T-cell (primary cell): ENCODE measurements at regions of chr7 and their contacts with region 1.

Region 1: DNA sequence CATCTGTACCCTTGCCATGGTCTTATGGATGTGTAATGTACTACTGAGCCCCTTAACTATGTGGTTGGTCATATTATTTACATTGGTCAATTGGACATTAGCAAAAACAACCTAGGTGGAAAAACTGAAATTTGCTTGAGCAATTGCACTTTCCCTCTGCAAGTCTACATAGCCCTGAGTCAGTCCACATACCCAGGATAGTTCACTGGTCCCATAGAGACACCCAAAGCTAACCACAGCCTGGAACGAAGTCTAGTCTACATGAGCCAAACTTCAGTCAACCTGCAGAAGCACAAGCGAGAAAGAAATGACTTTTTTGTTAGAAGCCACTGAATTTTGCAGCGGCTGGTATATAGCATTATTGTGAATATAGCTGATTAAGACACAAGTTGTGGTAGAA is 37.6 kb upstream of the COL1A2 start:
- DNase-seq: no peak
- ATAC-seq: no peak
- H3K4me3 ChIP-seq: no peak overlapping the region
- H3K4me3 Mint-ChIP-seq: no peak overlapping the region
- H3K27ac ChIP-seq: no peak overlapping the region
- H3K27ac Mint-ChIP-seq: no peak overlapping the region
- H3K4me1 ChIP-seq: no peaks in the 10 kb centered on the region
- H3K4me1 Mint-ChIP-seq: no peaks in the 10 kb centered on the region
- H3K27me3 ChIP-seq: no peaks in the 10 kb centered on the region
- H3K27me3 Mint-ChIP-seq: peaks cover 5 to 29% of the 10 kb centered on the region in 2 donors

Region 2: GRCh38 chr7:94100723-94101345 is 256.2 kb before region 1 on chr7:
- CTCF ChIA-PET with region 1: no interaction called
- POLR2A ChIA-PET with region 1: no interaction called
- DNase-seq: no peak
- ATAC-seq: no peak
- H3K4me3 ChIP-seq: no peak overlapping the region
- H3K4me3 Mint-ChIP-seq: no peak overlapping the region
- H3K27ac ChIP-seq: no peak overlapping the region
- H3K27ac Mint-ChIP-seq: no peak overlapping the region
- H3K4me1 ChIP-seq: no peaks in the 10 kb centered on the region
- H3K4me1 Mint-ChIP-seq: no peaks in the 10 kb centered on the region
- H3K27me3 ChIP-seq: peaks cover 0 to 4% of the 10 kb centered on the region in 2 experiments
- H3K27me3 Mint-ChIP-seq: peaks cover 0 to 11% of the 10 kb centered on the region in 2 donors

Region 3: DNA sequence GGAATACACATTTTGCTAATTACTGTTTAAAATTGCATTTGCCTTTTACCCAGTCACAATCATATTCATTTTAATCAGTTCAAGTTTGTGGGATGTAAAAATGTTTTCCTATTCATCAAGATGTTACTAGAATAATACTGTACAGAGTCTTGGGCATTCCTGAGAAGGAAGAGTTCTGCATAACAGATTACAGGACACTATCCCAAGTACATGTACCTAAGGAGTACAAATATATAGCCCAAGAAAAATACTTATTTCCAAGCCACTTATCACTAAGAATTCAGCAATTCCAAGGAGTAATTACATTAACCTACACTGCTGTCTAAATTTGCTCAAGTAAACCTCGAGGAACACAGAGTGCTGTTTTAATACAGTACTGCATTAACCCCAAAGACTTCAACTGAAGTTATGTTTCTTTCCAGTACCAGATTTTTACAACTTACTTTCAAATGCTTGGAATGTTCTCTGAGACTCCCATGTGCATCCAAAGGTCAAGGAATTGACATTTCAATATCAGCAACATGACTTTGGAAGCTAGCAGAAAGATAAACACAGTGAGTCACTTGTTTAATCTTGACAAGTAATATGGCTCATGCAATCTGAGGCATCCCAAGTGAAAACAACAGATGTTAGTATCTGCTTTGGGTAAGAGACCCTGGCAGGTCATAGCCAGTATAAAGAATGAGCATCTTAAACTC is 227.5 kb before region 1 on chr7:
- CTCF ChIA-PET with region 1: no interaction called
- POLR2A ChIA-PET with region 1: interaction called in 1 of 2 experiments, 10 read pairs
- DNase-seq: no peak
- ATAC-seq: no peak
- H3K4me3 ChIP-seq: no peak overlapping the region
- H3K4me3 Mint-ChIP-seq: no peak overlapping the region
- H3K27ac ChIP-seq: no peak overlapping the region
- H3K27ac Mint-ChIP-seq: no peak overlapping the region
- H3K4me1 ChIP-seq: no peaks in the 10 kb centered on the region
- H3K4me1 Mint-ChIP-seq: no peaks in the 10 kb centered on the region
- H3K27me3 ChIP-seq: no peaks in the 10 kb centered on the region
- H3K27me3 Mint-ChIP-seq: peaks cover 0 to 3% of the 10 kb centered on the region in 2 donors

Region 4: GRCh38 chr7:94266238-94266644 is 90.8 kb before region 1 on chr7:
- CTCF ChIA-PET with region 1: interaction called in 1 of 2 experiments, 11 read pairs
- POLR2A ChIA-PET with region 1: no interaction called
- DNase-seq: no peak
- ATAC-seq: no peak
- H3K4me3 ChIP-seq: no peak overlapping the region
- H3K4me3 Mint-ChIP-seq: no peak overlapping the region
- H3K27ac ChIP-seq: no peak overlapping the region
- H3K27ac Mint-ChIP-seq: no peak overlapping the region
- H3K4me1 ChIP-seq: no peaks in the 10 kb centered on the region
- H3K4me1 Mint-ChIP-seq: no peaks in the 10 kb centered on the region
- H3K27me3 ChIP-seq: no peaks in the 10 kb centered on the region
- H3K27me3 Mint-ChIP-seq: peaks cover 5 to 7% of the 10 kb centered on the region in 2 donors